ENCODE measurements at regions of chr7 and their contacts with region 1.

Region 1: GRCh38 chr7:108468246-108468645 is 12.0 kb upstream of the NRCAM start:
- DNase-seq: no peak
- H3K4me3 ChIP-seq: no peak overlapping the region
- H3K27ac ChIP-seq: no peak overlapping the region
- H3K4me1 ChIP-seq: no peaks in the 10 kb centered on the region
- H3K27me3 ChIP-seq: no peaks in the 10 kb centered on the region
- CTCF ChIP-seq: no peak

Region 2: DNA sequence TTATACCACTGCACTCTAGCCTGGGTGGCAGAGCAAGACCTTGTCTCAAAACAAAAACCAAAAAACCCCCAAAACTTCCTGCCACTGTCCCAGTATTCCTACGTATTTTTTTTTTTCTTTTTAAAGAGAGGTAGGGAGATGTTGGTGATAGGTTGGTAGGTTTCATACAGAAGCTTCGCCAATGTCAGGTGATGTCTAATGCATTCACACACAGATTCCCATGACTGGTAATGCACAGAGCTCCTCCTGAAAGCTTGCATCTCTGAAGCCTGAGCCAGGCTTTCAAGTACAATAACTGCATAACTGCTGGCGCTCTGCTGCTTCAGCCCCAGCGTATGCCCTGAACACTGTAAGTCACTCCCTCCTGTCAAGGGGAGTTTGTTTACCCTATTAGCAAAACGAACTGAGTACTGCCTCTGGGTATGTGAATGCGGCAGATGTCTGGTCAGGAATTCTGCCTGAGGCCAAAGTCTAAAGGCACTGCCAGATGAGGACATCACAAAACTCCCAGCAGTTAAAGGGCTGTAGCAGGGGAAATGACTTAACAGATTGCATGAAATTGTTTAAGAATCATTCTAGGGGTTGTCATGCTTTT is 109.8 kb before region 1 on chr7:
- CTCF ChIA-PET with region 1: no interaction called
- POLR2A ChIA-PET with region 1: interaction called, 18 read pairs
- intact Hi-C with region 1: no loop called
- DNase-seq: peak; percentile 81 to 93
- H3K4me3 ChIP-seq: no peak overlapping the region
- H3K27ac ChIP-seq: 0 out of 2 replicates have a peak overlapping the region, but pooled peaks have one; percentile 3
- H3K4me1 ChIP-seq: peaks cover 13% of the 10 kb centered on the region
- H3K27me3 ChIP-seq: no peaks in the 10 kb centered on the region
- CTCF ChIP-seq: no peak

Region 3: GRCh38 chr7:108722561-108722960 is 254.3 kb after region 1 on chr7:
- CTCF ChIA-PET with region 1: no interaction called
- POLR2A ChIA-PET with region 1: interaction called, 31 read pairs
- intact Hi-C with region 1: no loop called
- DNase-seq: no peak
- H3K4me3 ChIP-seq: no peak overlapping the region
- H3K27ac ChIP-seq: no peak overlapping the region
- H3K4me1 ChIP-seq: no peaks in the 10 kb centered on the region
- H3K27me3 ChIP-seq: no peaks in the 10 kb centered on the region
- CTCF ChIP-seq: no peak

Region 4: GRCh38 chr7:110418659-110419280 is 1950.5 kb after region 1 on chr7:
- CTCF ChIA-PET with region 1: no interaction called
- POLR2A ChIA-PET with region 1: interaction called, 18 read pairs
- intact Hi-C with region 1: no loop called
- DNase-seq: no peak
- H3K4me3 ChIP-seq: no peak overlapping the region
- H3K27ac ChIP-seq: no peak overlapping the region
- H3K4me1 ChIP-seq: no peaks in the 10 kb centered on the region
- H3K27me3 ChIP-seq: no peaks in the 10 kb centered on the region
- CTCF ChIP-seq: no peak

Measured in PC-9 (cell line).